ENCODE measurements at regions of chr14 and their contacts with region 1.

Region 1: DNA sequence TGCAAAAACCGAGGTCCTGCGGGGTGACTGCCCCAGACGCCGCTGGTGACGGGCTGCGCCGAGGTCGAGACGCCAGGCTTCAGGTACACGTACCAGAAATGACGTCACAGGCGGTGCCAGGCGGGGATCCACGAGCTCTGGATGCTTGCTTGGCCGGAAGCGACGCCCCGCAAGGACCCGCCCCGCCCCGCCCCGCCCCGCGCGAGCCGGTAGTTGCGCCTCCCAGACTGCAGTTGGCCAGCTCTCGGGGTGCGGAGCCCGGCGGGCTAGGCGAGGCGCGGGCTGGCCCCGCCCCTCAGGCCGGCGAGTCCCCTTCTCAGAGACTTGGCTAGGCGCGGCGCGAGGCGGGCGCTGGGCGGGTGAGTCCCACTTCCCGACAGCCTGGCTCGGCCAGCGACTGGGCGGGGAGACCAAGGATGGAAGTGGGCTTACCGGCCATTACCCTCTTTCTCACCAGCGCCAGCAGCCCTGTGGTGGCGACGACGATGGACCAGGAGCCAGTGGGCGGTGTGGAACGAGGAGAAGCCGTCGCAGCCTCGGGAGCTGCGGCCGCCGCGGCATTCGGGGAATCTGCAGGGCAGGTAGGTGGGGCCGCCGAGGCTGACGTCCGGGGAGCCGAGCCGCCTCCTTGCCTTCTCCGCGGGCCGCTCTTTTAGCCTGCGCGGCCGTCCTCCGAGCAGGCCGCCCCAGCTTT is at the start of gene FAM177A1:
- H3K4me3 Mint-ChIP-seq: peak within 1 kb of the TSS; percentile 99
- H3K27ac Mint-ChIP-seq: peak within 1 kb of the TSS; percentile 98
- H3K4me1 Mint-ChIP-seq: peaks cover 38% of the 10 kb centered on the region
- H3K27me3 Mint-ChIP-seq: no peaks in the 10 kb centered on the region

Region 2: DNA sequence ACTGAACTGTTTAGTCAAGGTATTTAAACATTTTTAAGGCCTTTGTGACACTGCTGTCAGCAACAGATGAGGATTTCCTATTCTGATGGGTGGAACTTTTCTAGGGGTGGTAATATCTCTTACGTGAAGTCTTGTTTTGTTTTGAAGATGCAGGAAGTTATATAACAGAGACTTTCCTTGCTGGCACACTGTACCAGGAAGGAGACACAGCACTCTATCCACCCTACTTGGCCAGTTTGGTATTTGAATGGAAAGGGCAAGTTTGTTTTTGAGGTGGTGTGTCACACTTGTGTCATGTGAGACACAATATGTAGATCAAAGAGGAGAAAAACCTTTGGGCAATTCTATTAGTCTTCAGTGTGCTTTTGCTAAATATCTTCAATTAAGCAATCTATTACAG is 115.0 kb before region 1 on chr14:
- intact Hi-C with region 1: no loop called
- H3K4me3 Mint-ChIP-seq: no peak overlapping the region
- H3K27ac Mint-ChIP-seq: peak overlapping the region; percentile 82
- H3K4me1 Mint-ChIP-seq: peaks cover 23% of the 10 kb centered on the region
- H3K27me3 Mint-ChIP-seq: no peaks in the 10 kb centered on the region

Region 3: DNA sequence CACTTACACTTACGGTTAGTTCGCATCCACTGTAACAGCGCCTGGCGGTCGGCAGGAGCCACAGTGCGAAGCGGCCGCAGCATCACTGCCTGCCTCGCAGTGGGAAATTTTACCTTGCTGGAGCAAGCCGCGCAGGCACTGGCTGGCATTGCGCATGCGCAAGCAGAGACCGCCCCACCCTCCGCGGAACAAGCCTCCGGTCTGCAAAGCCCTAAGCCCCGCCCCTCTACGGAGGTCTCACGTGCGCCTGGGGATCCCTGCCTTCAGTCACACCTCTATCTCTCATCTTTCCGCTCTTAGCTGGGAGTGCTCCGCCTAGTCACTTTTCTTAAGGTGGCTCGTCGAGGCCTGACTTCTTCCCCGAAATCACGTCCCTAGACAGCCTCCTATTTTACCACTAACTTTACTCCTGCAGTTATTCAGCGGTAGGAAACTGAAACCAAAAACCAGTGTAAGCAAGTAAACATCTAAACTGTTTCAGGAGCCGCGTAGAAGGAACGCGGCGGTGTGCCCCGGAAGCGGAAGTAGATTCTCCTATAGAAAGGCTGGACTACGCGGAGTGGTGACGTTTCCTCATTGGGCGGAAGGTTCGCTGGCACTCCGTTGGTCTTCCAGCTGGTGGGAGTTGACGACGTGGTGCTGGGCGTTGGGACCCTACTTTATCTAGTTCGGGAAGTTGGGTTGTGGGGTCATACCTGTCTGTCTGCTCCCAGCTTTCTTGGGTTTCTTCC is 63.6 kb before region 1 on chr14 and contains the start of gene SRP54:
- intact Hi-C with region 1: loop called (anchors 1 kb)
- H3K4me3 Mint-ChIP-seq: no peak within 1 kb of the TSS
- H3K27ac Mint-ChIP-seq: no peak within 1 kb of the TSS
- H3K4me1 Mint-ChIP-seq: no peaks in the 10 kb centered on the region
- H3K27me3 Mint-ChIP-seq: no peaks in the 10 kb centered on the region